PC-9 (cell line): ENCODE measurements at regions of chr16 and their contacts with region 1.

Region 1: DNA sequence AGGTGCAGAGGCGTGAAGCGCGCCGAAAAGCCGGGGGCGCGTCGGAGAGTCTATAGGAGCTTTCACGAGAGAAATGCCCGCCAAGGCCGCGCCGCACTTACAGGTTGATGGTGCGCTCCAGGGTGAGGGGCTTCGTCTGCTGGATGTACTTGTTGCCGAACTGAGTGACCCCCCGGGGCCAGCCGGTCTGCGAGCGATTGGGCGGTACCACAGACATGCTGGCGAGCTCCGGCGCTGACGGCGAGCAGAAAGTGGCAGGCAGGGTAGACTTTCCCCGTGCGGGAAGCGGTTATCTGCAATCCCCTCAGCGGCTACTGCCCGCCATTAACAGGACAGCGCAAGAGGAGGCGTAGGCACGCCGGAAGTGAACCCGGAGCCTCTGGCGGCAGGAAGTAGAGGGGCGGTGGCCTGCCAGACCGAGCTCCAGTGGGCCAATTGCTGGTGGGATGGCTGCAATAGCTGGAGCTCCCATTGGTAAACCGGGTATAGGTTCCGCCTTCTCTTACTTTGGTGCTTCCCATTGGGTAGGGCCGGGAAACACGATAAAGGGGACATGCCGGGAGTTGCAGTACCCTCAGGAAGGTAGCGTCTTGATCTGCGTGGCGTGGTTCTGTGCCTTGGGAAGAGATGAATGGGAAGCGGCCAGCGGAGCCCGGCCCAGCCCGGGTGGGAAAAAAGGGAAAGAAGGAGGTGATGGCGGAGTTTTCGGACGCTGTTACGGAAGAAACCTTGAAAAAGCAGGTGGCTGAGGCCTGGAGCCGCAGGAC is at the starts of genes NUDT21 and OGFOD1:
- DNase-seq: peak; percentile 89 to 98
- H3K4me3 ChIP-seq: peak within 1 kb of the TSS; percentile 91
- H3K27ac ChIP-seq: peak within 1 kb of the TSS; percentile 66
- H3K4me1 ChIP-seq: peaks cover 31% of the 10 kb centered on the region
- H3K27me3 ChIP-seq: no peaks in the 10 kb centered on the region
- CTCF ChIP-seq: no peak
- total RNA-seq, gene NUDT21: 139 and 171 TPM in 2 replicates
- total RNA-seq, gene OGFOD1: 24.8 and 30.0 TPM in 2 replicates

Region 2: GRCh38 chr16:56332464-56333079 is 118.6 kb before region 1 on chr16:
- CTCF ChIA-PET with region 1: no interaction called
- POLR2A ChIA-PET with region 1: interaction called, 3 read pairs
- intact Hi-C with region 1: loop called (anchors 5 kb)
- DNase-seq: peak; percentile 62 to 83
- H3K4me3 ChIP-seq: no peak overlapping the region
- H3K27ac ChIP-seq: peak overlapping the region; percentile 99
- H3K4me1 ChIP-seq: peaks cover 60% of the 10 kb centered on the region
- H3K27me3 ChIP-seq: no peaks in the 10 kb centered on the region
- CTCF ChIP-seq: no peak

Region 3: DNA sequence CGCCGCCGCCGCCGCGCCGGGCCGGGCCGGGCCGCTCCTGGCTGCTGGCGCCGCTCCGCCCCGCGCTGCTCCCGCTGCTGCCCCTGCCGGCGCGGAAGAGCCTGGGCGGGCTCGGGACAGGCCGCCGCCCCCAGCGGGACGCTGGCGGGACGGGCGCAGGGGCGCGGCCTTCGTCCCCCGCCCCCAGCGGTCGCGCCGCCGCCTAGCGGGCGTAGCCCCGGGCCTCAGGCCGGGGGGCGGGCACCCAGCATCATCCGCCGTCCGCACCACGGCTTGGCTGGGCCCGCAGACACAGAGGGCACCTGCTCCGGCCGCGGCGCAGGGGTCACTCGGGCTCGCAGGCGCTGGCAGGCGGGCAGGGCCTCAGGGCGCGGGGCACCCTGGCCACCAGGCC is 25.7 kb before region 1 on chr16 and contains the start of gene AMFR:
- CTCF ChIA-PET with region 1: no interaction called
- POLR2A ChIA-PET with region 1: interaction called, 3 read pairs
- intact Hi-C with region 1: loop called (anchors 2 kb)
- DNase-seq: peak; percentile 57 to 82
- H3K4me3 ChIP-seq: peak within 1 kb of the TSS; percentile 64
- H3K27ac ChIP-seq: peak within 1 kb of the TSS; percentile 27
- H3K4me1 ChIP-seq: peaks cover 43% of the 10 kb centered on the region
- H3K27me3 ChIP-seq: no peaks in the 10 kb centered on the region
- CTCF ChIP-seq: no peak; the same call in 1 of the 2 replicates
- total RNA-seq, gene AMFR: 89.4 and 132 TPM in 2 replicates